Kidney (tissue), 22 donors: ENCODE measurements at regions of chr5 and their contacts with region 1.

Region 1: GRCh38 chr5:159262859-159263567 is at the start of gene UBLCP1:
- DNase-seq: peak; percentile 87 to 94 (median 89)
- H3K4me3 ChIP-seq: peak within 1 kb of the TSS; percentile 83 to 100 (median 90)
- H3K27ac ChIP-seq: peak within 1 kb of the TSS; percentile 88 to 89
- H3K4me1 ChIP-seq: peaks cover 0 to 8% (median 0%) of the 10 kb centered on the region in 3 donors
- H3K27me3 ChIP-seq: peaks cover 2% of the 10 kb centered on the region
- CTCF ChIP-seq: no peak
- total RNA-seq, gene UBLCP1: 25.1 TPM

Region 2: GRCh38 chr5:159156426-159157238 is 106.4 kb before region 1 on chr5:
- intact Hi-C with region 1: loop called (anchors 10 kb)
- DNase-seq: peak in 3 of 5 donors; percentile 22 to 87 (median 79)
- H3K4me3 ChIP-seq: no peak overlapping the region
- H3K27ac ChIP-seq: no peak overlapping the region
- H3K4me1 ChIP-seq: no peaks in the 10 kb centered on the region
- H3K27me3 ChIP-seq: no peaks in the 10 kb centered on the region
- CTCF ChIP-seq: peak; percentile 88